Calu3 (cell line): ENCODE measurements at regions of chr1 and their contacts with region 1.

Region 1: GRCh38 chr1:31182352-31182751 is 57.3 kb downstream of the NKAIN1 start:
- DNase-seq: peak; percentile 84
- H3K4me3 Mint-ChIP-seq: peak overlapping the region; percentile 44
- H3K27ac Mint-ChIP-seq: no peak overlapping the region
- H3K4me1 Mint-ChIP-seq: no peaks in the 10 kb centered on the region
- H3K27me3 Mint-ChIP-seq: peaks cover 72% of the 10 kb centered on the region
- CTCF ChIP-seq: peak; percentile 31

Region 2: GRCh38 chr1:31335007-31335406 is 152.7 kb after region 1 on chr1:
- CTCF ChIA-PET with region 1: interaction called, 5 read pairs
- intact Hi-C with region 1: loop called (anchors 1 kb)
- DNase-seq: no peak
- H3K4me3 Mint-ChIP-seq: no peak overlapping the region
- H3K27ac Mint-ChIP-seq: no peak overlapping the region
- H3K4me1 Mint-ChIP-seq: no peaks in the 10 kb centered on the region
- H3K27me3 Mint-ChIP-seq: no peaks in the 10 kb centered on the region
- CTCF ChIP-seq: no peak

Region 3: GRCh38 chr1:31422505-31423319 is 240.4 kb after region 1 on chr1:
- CTCF ChIA-PET with region 1: interaction called, 3 read pairs
- intact Hi-C with region 1: loop called (anchors 2 kb)
- DNase-seq: peak; percentile 90
- H3K4me3 Mint-ChIP-seq: no peak overlapping the region
- H3K27ac Mint-ChIP-seq: peak overlapping the region; percentile 80
- H3K4me1 Mint-ChIP-seq: peaks cover 35% of the 10 kb centered on the region
- H3K27me3 Mint-ChIP-seq: no peaks in the 10 kb centered on the region
- CTCF ChIP-seq: peak; percentile 79

Region 4: GRCh38 chr1:31548907-31549808 is 366.8 kb after region 1 on chr1:
- CTCF ChIA-PET with region 1: interaction called, 6 read pairs
- intact Hi-C with region 1: loop called (anchors 1 kb)
- DNase-seq: peak; percentile 93
- H3K4me3 Mint-ChIP-seq: peak overlapping the region; percentile 64
- H3K27ac Mint-ChIP-seq: peak overlapping the region; percentile 69
- H3K4me1 Mint-ChIP-seq: peaks cover 7% of the 10 kb centered on the region
- H3K27me3 Mint-ChIP-seq: no peaks in the 10 kb centered on the region
- CTCF ChIP-seq: peak; percentile 91

Region 5: GRCh38 chr1:32179443-32180185 is 997.3 kb after region 1 on chr1 and contains the start of gene TXLNA:
- CTCF ChIA-PET with region 1: no interaction called
- intact Hi-C with region 1: no loop called
- DNase-seq: peak; percentile 93
- H3K4me3 Mint-ChIP-seq: peak within 1 kb of the TSS; percentile 95
- H3K27ac Mint-ChIP-seq: peak within 1 kb of the TSS; percentile 96
- H3K4me1 Mint-ChIP-seq: peaks cover 23% of the 10 kb centered on the region
- H3K27me3 Mint-ChIP-seq: no peaks in the 10 kb centered on the region
- CTCF ChIP-seq: no peak
- total RNA-seq, gene TXLNA: 58.4 and 62.4 TPM in 2 replicates